Panc1 (cell line): ENCODE measurements at regions of chr7 and their contacts with region 1.

Region 1: DNA sequence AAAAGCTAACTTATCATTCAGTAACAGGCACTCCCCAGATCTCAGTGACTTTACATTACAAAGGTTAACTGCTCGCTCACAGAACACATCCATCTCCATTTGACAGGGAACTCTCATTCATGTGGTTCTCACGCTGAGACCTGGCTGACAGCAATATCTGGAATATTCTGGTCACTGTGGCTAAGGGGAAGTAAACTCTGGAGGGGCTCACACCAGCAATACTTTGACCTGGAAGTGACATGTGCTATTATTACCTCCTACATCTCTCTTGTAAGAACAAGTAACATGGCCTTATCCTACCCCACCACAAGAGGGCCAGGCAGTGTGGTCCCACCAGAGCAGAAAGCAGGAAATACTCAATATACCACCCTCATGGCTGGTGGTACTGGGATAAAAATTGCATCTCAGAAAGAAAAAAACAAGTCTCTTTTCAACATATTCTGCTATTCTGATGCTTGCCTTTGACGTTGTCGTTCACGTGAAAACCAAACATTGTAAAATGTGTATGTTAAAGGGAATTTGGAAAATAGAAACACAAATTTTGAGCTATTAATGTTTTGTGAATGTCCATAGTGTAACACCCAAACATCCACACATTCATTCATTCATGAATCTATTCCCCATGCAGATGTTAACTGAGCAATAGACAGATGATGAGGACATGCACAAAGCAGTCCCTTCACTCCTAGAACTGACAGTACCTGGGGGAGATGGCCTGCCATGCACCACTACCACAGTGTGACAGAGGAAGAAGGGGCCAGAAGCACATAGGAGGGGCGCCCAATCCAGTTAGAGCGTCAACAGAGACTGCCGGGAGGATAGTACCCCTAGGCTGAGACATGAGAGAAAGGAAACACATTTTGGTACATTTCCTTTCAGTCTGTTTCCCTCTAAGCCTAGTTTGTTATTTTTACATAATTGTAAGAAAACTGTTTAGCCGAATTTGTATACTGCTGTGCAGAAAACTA is 166.0 kb upstream of the SP4 start:
- DNase-seq: no peak
- ATAC-seq: peak; percentile 81
- H3K4me3 ChIP-seq: no peak overlapping the region
- H3K27ac ChIP-seq: no peak overlapping the region
- H3K4me1 ChIP-seq: no peaks in the 10 kb centered on the region
- H3K27me3 ChIP-seq: 0 out of 2 replicates have a peak, but pooled peaks cover 2% of the 10 kb centered on the region
- CTCF ChIP-seq: peak; percentile 74

Region 2: DNA sequence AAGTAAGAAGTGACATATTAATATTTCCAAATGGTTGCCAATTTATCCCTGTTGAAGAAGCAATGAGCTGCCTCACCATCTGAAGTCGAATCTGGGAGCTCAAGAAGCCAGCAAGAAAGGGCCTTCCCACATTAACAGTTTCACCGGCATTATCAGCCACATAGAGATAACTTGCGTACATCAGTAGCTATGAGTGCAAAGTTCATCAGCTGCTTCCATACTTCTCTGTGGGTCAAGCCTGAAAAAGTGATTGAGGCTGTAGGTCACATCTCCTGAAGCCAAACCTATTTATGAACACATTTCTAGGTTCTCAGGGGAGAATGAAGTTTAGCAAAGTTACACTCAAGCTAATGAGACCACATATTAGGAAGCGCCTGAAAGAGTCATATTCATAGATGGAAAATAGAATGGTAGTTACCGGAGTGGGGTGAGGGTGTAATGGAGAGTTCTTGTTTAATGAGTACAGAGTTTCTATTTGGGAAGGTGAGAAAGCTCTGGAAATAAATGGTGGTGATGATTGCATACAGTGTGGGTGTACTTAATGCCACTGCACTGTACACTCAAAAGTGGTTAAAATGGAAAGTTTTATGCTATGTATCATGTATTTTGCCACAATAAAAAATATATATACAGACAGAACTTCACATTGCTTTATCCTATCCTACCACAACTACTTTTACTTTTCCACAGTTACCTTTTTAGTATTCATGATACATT is 23.4 kb before region 1 on chr7:
- CTCF ChIA-PET with region 1: no interaction called
- POLR2A ChIA-PET with region 1: no interaction called
- in situ Hi-C with region 1: no loop called
- intact Hi-C with region 1: no loop called
- DNase-seq: no peak
- ATAC-seq: no peak
- H3K4me3 ChIP-seq: no peak overlapping the region
- H3K27ac ChIP-seq: no peak overlapping the region
- H3K4me1 ChIP-seq: no peaks in the 10 kb centered on the region
- H3K27me3 ChIP-seq: peaks cover 3% of the 10 kb centered on the region; the same call in 1 of the 2 replicates
- CTCF ChIP-seq: no peak

Region 3: GRCh38 chr7:21293771-21294170 is 31.9 kb after region 1 on chr7:
- CTCF ChIA-PET with region 1: no interaction called
- POLR2A ChIA-PET with region 1: no interaction called
- in situ Hi-C with region 1: no loop called
- intact Hi-C with region 1: no loop called
- DNase-seq: no peak
- ATAC-seq: no peak
- H3K4me3 ChIP-seq: no peak overlapping the region
- H3K27ac ChIP-seq: no peak overlapping the region
- H3K4me1 ChIP-seq: no peaks in the 10 kb centered on the region
- H3K27me3 ChIP-seq: no peaks in the 10 kb centered on the region
- CTCF ChIP-seq: no peak

Region 4: GRCh38 chr7:22001345-22002004 is 739.6 kb after region 1 on chr7:
- CTCF ChIA-PET with region 1: no interaction called
- POLR2A ChIA-PET with region 1: no interaction called
- in situ Hi-C with region 1: no loop called
- intact Hi-C with region 1: loop called (anchors 5 kb)
- DNase-seq: peak; percentile 35
- ATAC-seq: peak; percentile 80
- H3K4me3 ChIP-seq: no peak overlapping the region; a peak in 1 of 4 replicates
- H3K27ac ChIP-seq: no peak overlapping the region
- H3K4me1 ChIP-seq: no peaks in the 10 kb centered on the region
- H3K27me3 ChIP-seq: peaks cover 17% of the 10 kb centered on the region
- CTCF ChIP-seq: peak; percentile 81; the same call in 1 of the 2 replicates

Region 5: DNA sequence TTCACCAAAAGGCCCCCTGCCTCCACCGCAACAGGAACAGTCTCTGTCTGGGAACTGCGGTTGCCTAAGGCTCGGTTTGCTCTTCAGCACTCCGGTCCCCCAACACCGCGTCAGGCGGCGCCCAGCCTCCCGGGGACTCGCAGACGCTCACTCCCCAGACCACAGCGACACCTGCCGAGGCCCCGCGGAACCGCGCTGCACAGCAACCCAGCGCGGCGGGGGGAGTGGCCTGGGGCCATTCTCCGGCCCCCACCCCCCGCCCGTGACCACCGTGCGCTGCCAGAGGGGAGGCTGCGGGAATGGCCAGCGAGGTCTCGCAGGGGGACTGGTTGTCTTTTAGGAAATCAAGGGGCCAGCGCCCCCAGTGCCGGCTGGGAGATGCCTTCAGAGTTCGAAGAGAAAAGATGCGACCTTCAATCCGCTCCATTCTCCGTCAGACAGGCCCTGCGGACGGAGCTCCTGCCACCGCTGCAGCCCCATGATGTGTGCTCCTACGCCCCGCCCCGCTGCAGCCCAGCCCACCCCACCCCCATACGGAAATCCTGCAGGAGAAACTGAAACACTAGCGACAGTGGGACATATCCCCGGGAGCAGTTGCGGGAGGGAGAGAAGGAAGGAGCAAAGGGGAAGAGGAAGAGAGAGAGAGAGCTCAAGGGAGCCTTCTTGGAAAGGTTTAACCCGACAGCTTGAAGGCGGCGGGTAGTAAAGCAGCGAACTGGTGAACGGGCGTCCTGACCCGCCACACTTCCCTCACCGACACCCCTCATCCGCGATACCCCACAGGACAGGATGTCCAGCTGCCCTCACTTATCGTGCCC is 821.2 kb after region 1 on chr7:
- CTCF ChIA-PET with region 1: no interaction called
- POLR2A ChIA-PET with region 1: no interaction called
- in situ Hi-C with region 1: no loop called
- intact Hi-C with region 1: loop called (anchors 5 kb)
- DNase-seq: peak; percentile 56
- ATAC-seq: peak; percentile 98
- H3K4me3 ChIP-seq: peak overlapping the region; percentile 58 to 71
- H3K27ac ChIP-seq: peak overlapping the region; percentile 68
- H3K4me1 ChIP-seq: peaks cover 11% of the 10 kb centered on the region
- H3K27me3 ChIP-seq: peaks cover 30% of the 10 kb centered on the region
- CTCF ChIP-seq: peak; percentile 99